Breast epithelium (tissue), 4 donors: ENCODE measurements at regions of chr19 and their contacts with region 1.

Region 1: GRCh38 chr19:18251587-18252369 is 22.5 kb downstream of the IQCN start:
- DNase-seq: peak; percentile 61 to 79
- H3K4me3 ChIP-seq: no peak overlapping the region
- H3K27ac ChIP-seq: no peak overlapping the region
- H3K4me1 ChIP-seq: no peaks in the 10 kb centered on the region
- H3K27me3 ChIP-seq: no peaks in the 10 kb centered on the region
- CTCF ChIP-seq: peak; percentile 97
- POLR2A ChIP-seq: no peak

Region 2: DNA sequence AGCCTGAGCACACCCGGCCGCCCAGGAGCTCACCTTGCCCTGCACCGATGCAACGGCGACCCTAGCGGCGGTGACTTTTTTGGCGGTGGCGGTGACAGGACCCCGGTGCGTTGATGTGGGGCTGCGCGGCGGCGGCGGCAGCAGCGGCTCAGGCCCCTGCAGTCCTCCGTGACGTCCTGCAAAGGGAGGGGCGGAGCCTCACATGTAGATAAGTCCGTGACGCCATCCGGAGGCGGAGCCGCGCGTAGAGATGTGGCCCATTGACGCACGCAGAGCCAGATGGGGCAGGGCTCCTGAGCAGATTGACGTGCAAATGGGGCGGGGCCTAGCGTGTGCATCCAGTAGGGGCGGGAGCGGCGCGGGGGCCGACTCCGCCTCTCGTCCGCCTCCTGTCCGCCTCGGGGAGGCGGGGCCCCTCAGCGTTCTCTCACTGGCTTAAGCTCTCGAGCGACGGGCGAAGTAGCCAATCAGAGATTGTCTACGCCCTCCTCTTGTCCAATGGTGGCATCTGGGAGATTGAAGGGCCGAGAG is 47.9 kb before region 1 on chr19 and contains the start of gene RAB3A:
- intact Hi-C with region 1: loop called (anchors 1 kb)
- DNase-seq: peak; percentile 99 to 100
- H3K4me3 ChIP-seq: peak within 1 kb of the TSS; percentile 56 to 77 (median 74)
- H3K27ac ChIP-seq: peak within 1 kb of the TSS; percentile 96 to 99
- H3K4me1 ChIP-seq: peaks cover 0 to 17% of the 10 kb centered on the region in 2 donors
- H3K27me3 ChIP-seq: no peaks in the 10 kb centered on the region
- CTCF ChIP-seq: no peak
- POLR2A ChIP-seq: no peak
- total RNA-seq, gene RAB3A: 0.66 to 1.2 (median 1.1) TPM